Calu3 (cell line): ENCODE measurements at regions of chr19 and their contacts with region 1.

Region 1: GRCh38 chr19:9140159-9140874 is at the start of gene ZNF317:
- DNase-seq: peak; percentile 81
- H3K4me3 Mint-ChIP-seq: peak within 1 kb of the TSS; percentile 98
- H3K27ac Mint-ChIP-seq: peak within 1 kb of the TSS; percentile 97
- H3K4me1 Mint-ChIP-seq: no peaks in the 10 kb centered on the region
- H3K27me3 Mint-ChIP-seq: no peaks in the 10 kb centered on the region
- CTCF ChIP-seq: no peak
- total RNA-seq, gene ZNF317: 25.4 and 26.3 TPM in 2 replicates

Region 2: GRCh38 chr19:9151367-9151766 is 11.1 kb after region 1 on chr19:
- CTCF ChIA-PET with region 1: no interaction called
- intact Hi-C with region 1: no loop called
- DNase-seq: no peak
- H3K4me3 Mint-ChIP-seq: no peak overlapping the region
- H3K27ac Mint-ChIP-seq: no peak overlapping the region
- H3K4me1 Mint-ChIP-seq: peaks cover 16% of the 10 kb centered on the region
- H3K27me3 Mint-ChIP-seq: no peaks in the 10 kb centered on the region
- CTCF ChIP-seq: no peak

Region 3: GRCh38 chr19:9205501-9206113 is 65.3 kb after region 1 on chr19:
- CTCF ChIA-PET with region 1: no interaction called
- intact Hi-C with region 1: loop called (anchors 2 kb)
- DNase-seq: peak; percentile 64
- H3K4me3 Mint-ChIP-seq: no peak overlapping the region
- H3K27ac Mint-ChIP-seq: no peak overlapping the region
- H3K4me1 Mint-ChIP-seq: no peaks in the 10 kb centered on the region
- H3K27me3 Mint-ChIP-seq: no peaks in the 10 kb centered on the region
- CTCF ChIP-seq: peak; percentile 49

Region 4: GRCh38 chr19:9329999-9330398 is 189.7 kb after region 1 on chr19:
- CTCF ChIA-PET with region 1: no interaction called
- intact Hi-C with region 1: no loop called
- DNase-seq: no peak
- H3K4me3 Mint-ChIP-seq: no peak overlapping the region
- H3K27ac Mint-ChIP-seq: no peak overlapping the region
- H3K4me1 Mint-ChIP-seq: no peaks in the 10 kb centered on the region
- H3K27me3 Mint-ChIP-seq: no peaks in the 10 kb centered on the region
- CTCF ChIP-seq: no peak

Region 5: DNA sequence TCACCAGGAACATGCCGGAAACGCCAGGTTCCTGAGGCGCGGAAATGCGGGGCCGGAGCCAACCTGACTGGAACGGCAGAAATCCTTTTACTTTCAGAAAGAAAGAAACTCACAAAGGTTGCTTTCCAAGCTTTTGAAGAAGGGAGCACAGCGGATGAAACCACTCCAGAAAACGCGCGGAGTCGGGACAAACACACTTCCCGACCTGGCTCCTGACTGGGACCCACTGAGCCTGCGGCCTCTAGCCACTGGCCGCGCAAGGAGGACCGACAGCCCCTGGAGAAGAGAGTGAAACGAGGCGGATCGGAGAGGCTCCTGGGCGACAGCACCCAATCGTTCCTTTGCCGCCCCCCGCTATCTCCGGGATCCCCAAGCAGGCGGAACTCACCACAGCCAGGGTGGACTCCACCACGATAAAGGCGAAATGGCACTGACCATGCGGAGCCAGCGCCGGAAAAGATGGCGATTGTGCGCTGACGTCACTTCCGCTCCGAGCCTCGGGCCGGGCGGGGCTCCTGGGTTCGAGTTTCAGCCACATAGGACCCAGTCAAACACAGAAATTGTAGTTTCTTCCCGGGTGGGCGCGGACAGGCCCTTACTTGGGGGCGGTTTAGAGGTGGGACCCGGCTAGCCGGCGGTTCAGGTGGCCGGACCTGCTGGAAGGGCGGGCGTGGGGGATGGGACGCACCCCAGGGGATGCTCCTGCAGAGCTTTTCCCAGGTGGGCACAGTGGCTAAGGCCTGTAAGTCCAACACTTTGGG is 443.9 kb after region 1 on chr19 and contains the start of gene ZNF121:
- CTCF ChIA-PET with region 1: no interaction called
- intact Hi-C with region 1: loop called (anchors 10 kb)
- DNase-seq: peak; percentile 77
- H3K4me3 Mint-ChIP-seq: peak within 1 kb of the TSS; percentile 83
- H3K27ac Mint-ChIP-seq: peak within 1 kb of the TSS; percentile 93
- H3K4me1 Mint-ChIP-seq: peaks cover 17% of the 10 kb centered on the region
- H3K27me3 Mint-ChIP-seq: no peaks in the 10 kb centered on the region
- CTCF ChIP-seq: no peak
- total RNA-seq, gene ZNF121: 61.1 and 66.2 TPM in 2 replicates

Region 6: GRCh38 chr19:9796113-9796773 is 655.9 kb after region 1 on chr19:
- CTCF ChIA-PET with region 1: no interaction called
- intact Hi-C with region 1: loop called (anchors 2 kb)
- DNase-seq: peak; percentile 76
- H3K4me3 Mint-ChIP-seq: no peak overlapping the region
- H3K27ac Mint-ChIP-seq: peak overlapping the region; percentile 74
- H3K4me1 Mint-ChIP-seq: peaks cover 8% of the 10 kb centered on the region
- H3K27me3 Mint-ChIP-seq: no peaks in the 10 kb centered on the region
- CTCF ChIP-seq: peak; percentile 61